A673 (cell line): ENCODE measurements at regions of chr17 and their contacts with region 1.

Region 1: GRCh38 chr17:8785547-8786413 is 13.4 kb downstream of the MFSD6L start:
- DNase-seq: peak; percentile 82
- H3K4me3 ChIP-seq: no peak overlapping the region
- H3K27ac ChIP-seq: no peak overlapping the region
- H3K4me1 ChIP-seq: no peaks in the 10 kb centered on the region
- H3K27me3 ChIP-seq: no peaks in the 10 kb centered on the region
- CTCF ChIP-seq: peak; percentile 91

Region 2: GRCh38 chr17:8409966-8410864 is 375.6 kb before region 1 on chr17:
- CTCF ChIA-PET with region 1: interaction called, 7 read pairs
- POLR2A ChIA-PET with region 1: no interaction called
- intact Hi-C with region 1: loop called (anchors 2 kb)
- DNase-seq: peak; percentile 93
- H3K4me3 ChIP-seq: no peak overlapping the region
- H3K27ac ChIP-seq: no peak overlapping the region
- H3K4me1 ChIP-seq: no peaks in the 10 kb centered on the region
- H3K27me3 ChIP-seq: no peaks in the 10 kb centered on the region
- CTCF ChIP-seq: peak; percentile 94

Region 3: DNA sequence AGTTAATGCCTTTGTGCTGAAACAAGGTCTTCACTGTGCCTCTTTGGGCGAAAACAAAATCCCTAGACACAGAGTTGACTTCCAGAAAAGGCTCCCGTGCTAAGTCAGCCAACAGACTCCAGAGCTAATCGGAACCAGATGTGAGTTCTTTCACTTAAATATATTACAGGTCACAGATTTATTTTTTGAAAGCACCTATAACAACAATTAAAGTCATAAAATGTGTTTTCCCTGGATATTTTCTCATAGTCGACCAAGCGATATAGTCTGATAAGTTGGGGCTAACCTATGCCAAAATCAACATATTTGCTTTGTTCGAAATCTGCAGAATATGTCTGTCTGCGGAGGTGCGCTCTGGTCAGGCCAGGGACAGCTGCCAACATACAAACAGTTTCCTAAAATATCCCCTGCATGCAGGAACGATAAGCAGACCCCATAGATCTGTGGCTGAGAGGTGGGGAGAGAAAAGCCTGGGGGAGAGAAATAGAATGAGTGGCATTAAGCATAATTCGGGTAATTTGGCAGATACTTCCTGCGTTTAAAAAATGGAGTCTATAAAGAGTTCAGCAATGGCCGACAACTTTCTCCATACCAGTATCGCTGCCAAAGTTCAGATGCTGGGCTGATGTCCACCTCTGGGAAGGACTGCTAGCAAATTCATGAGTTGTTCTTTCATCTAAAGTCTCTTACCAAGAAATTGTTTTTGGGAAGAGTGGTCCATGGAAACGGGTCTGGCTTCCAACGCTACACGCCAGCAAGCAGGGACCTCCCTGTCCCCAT is 104.4 kb before region 1 on chr17:
- CTCF ChIA-PET with region 1: no interaction called
- POLR2A ChIA-PET with region 1: no interaction called
- intact Hi-C with region 1: no loop called
- DNase-seq: peak; percentile 44
- H3K4me3 ChIP-seq: no peak overlapping the region
- H3K27ac ChIP-seq: no peak overlapping the region
- H3K4me1 ChIP-seq: peaks cover 10% of the 10 kb centered on the region
- H3K27me3 ChIP-seq: no peaks in the 10 kb centered on the region
- CTCF ChIP-seq: no peak

Region 4: DNA sequence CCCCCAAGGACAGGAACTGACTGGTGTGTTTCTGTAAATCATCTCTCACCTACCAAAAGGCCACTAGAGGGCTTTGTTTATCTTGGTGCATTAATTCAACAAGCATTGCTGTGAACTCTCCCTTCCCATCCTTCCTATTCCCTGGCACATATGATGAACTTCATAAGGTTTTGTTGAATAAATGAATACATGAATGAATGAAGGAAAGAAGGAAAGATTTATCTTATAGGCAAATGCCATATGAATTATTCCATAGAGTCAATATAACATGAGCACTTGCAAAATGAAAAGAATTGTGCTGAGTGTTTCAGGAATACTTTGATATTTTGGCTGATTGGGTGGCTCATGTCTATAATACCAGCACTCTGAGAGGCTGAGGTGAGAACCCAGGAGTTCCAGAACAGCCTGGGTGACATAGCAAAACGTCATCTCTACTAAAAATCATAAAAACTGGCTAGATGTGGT is 31.8 kb before region 1 on chr17:
- CTCF ChIA-PET with region 1: interaction called, 3 read pairs
- POLR2A ChIA-PET with region 1: no interaction called
- intact Hi-C with region 1: loop called (anchors 5 kb)
- DNase-seq: peak; percentile 52
- H3K4me3 ChIP-seq: no peak overlapping the region
- H3K27ac ChIP-seq: no peak overlapping the region
- H3K4me1 ChIP-seq: no peaks in the 10 kb centered on the region
- H3K27me3 ChIP-seq: no peaks in the 10 kb centered on the region
- CTCF ChIP-seq: peak; percentile 57